Ascending aorta (tissue), 2 donors: ENCODE measurements at regions of chr11 and their contacts with region 1.

Region 1: DNA sequence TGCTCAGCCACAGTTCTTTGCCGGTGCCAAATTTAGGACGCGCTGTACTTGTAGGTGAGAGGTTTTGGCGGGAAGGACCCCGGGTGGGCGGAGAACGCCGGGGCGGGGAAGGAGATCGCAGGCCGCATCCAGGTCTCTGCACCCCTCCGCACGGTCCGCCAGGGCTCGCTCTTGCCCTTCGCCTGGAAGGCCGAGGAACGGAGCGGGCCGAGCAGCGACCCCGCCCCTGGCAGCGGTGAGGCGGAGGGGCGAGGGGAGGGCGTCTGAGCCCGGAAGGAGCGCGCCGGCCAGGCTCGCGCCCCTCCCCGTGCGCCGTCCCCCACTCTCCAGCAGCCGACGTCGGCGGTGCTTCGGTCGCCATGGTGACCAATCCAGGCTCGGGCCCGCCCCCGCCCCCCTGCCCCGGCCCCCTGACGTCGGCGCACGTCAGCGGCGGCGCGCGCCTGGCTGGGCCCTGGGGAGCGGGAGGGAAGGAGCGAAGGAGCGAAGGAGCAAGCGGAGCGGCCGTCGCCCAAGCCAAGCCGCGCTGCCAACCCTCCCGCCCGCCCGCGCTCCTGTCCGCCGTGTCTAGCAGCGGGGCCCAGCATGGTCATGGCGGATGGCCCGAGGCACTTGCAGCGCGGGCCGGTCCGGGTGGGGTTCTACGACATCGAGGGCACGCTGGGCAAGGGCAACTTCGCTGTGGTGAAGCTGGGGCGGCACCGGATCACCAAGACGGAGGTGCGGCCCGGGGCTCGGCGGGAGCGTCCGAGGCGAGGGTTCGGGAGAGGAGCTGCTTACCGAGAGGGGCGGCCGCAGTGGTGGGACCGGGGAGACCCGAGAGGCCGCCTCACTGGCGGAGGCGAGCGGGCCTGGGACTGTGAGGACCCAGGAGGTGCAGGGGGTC is at the start of gene SIK2:
- DNase-seq: peak; percentile 73 to 96
- H3K4me3 ChIP-seq: peak within 1 kb of the TSS; percentile 84 to 98
- H3K27ac ChIP-seq: peak within 1 kb of the TSS; percentile 90 to 96
- H3K4me1 ChIP-seq: peaks cover 0 to 8% of the 10 kb centered on the region in 2 donors
- H3K27me3 ChIP-seq: no peaks in the 10 kb centered on the region
- CTCF ChIP-seq: peak; percentile 88 to 98 (median 93)
- total RNA-seq, gene SIK2: 8.2 TPM

Region 2: DNA sequence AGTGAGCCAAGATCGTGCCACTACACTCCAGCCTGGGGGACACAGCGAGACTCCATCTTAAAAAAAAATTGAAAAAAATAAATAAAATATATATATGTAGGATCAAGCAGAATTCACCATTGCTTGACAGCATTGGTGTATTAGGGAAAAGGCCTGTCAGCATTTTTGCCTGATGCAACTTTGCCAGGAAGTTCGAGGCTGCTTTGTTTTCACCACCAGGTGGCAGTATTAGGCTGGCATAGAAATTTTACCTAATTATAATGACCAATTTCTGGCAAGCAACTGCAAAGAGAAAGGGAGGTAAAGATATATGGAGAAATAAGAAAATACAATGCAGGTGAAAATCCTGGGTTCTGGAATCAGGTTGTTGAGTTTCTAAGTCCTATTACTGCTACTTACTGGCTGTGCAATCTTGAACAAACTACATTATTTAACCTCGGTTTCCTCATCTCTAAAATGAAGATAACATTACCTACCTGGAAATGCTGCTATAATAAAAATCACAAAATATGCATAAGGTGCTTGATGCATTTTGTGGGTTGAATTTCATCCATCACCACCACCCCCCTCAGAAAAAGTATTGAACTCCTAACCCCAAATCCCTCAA is 37.0 kb before region 1 on chr11:
- intact Hi-C with region 1: loop called (anchors 5 kb)
- DNase-seq: peak in 1 of 2 donors; percentile 85
- H3K4me3 ChIP-seq: no peak overlapping the region
- H3K27ac ChIP-seq: no peak overlapping the region
- H3K4me1 ChIP-seq: no peaks in the 10 kb centered on the region
- H3K27me3 ChIP-seq: no peaks in the 10 kb centered on the region
- CTCF ChIP-seq: peak; percentile 70 to 92 (median 90)

Region 3: DNA sequence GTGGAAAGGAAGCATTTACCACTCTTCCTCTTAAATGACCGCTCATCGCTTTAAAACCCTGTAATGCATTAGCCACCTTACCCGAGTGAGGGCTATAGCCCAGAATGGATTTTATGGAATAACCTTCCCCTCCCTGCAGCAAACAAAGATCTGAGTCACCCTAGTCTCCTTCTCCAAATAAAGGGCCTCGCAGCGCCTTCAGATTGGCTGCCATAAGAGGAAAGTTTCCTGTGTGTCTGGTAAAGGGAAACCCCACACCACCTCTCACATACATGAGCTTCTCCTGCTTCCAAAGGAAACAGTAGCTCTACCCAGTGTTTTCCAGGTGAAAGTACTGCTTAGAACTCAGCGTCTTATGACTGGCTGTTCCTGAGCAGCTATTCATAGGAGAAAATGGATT is 116.2 kb after region 1 on chr11:
- intact Hi-C with region 1: loop called (anchors 5 kb)
- DNase-seq: peak in 1 of 2 donors; percentile 75
- H3K4me3 ChIP-seq: peak overlapping the region in 1 of 2 donors; percentile 10
- H3K27ac ChIP-seq: peak overlapping the region; percentile 54 to 61
- H3K4me1 ChIP-seq: peaks cover 4 to 10% of the 10 kb centered on the region in 2 donors
- H3K27me3 ChIP-seq: no peaks in the 10 kb centered on the region
- CTCF ChIP-seq: no peak

Region 4: DNA sequence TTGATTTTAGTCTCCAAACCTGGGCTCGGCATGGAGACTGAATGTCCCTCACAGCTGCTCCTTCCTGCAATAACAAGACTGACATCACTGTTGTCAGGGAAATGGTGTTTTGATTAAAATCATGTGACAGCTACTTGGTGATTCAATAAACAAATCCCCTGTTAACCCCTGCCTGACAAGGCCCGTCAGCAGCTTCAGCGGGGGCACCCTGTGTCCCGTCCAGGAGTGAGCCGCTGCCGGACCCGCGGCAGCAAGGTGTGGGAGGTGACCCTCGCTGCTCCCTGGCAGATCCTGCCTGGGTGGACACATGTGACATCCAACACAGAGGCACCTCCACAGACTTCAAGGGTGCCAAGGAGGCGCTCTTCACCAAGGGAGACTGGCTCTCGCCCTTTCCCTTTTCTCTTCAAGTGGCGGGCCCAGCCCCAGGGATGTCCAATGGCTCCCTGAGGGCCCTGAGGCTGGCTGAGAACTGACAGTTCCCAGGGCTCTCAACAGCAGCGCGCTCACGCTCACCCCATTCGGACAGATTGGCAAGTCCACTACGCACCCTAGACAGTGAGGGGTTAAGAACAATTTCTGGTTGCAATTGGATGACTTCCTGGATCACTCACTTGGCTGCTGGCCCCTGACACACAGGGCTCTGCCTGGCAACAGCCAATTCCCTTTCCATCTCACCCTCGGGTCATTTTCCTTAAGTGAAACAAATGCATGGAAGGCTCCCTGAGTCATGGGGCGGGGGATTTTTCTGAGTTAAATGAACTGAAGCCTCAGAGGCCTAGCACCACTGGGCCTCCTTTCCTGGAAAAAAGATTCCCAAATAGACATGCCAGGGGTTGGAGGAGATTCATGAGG is 133.3 kb after region 1 on chr11:
- intact Hi-C with region 1: loop called (anchors 1 kb)
- DNase-seq: peak; percentile 47 to 95
- H3K4me3 ChIP-seq: peak overlapping the region; percentile 29 to 55
- H3K27ac ChIP-seq: peak overlapping the region; percentile 91 to 97
- H3K4me1 ChIP-seq: peaks cover 41 to 76% of the 10 kb centered on the region in 2 donors
- H3K27me3 ChIP-seq: no peaks in the 10 kb centered on the region
- CTCF ChIP-seq: no peak

Region 5: GRCh38 chr11:111766093-111766833 is 164.0 kb after region 1 on chr11 and contains the start of gene PPP2R1B:
- intact Hi-C with region 1: loop called (anchors 1 kb)
- DNase-seq: peak in 1 of 2 donors; percentile 80
- H3K4me3 ChIP-seq: peak within 1 kb of the TSS; percentile 85 to 98
- H3K27ac ChIP-seq: peak within 1 kb of the TSS; percentile 89
- H3K4me1 ChIP-seq: peaks cover 6 to 17% of the 10 kb centered on the region in 2 donors
- H3K27me3 ChIP-seq: no peaks in the 10 kb centered on the region
- CTCF ChIP-seq: no peak
- total RNA-seq, gene PPP2R1B: 7.7 TPM

Region 6: DNA sequence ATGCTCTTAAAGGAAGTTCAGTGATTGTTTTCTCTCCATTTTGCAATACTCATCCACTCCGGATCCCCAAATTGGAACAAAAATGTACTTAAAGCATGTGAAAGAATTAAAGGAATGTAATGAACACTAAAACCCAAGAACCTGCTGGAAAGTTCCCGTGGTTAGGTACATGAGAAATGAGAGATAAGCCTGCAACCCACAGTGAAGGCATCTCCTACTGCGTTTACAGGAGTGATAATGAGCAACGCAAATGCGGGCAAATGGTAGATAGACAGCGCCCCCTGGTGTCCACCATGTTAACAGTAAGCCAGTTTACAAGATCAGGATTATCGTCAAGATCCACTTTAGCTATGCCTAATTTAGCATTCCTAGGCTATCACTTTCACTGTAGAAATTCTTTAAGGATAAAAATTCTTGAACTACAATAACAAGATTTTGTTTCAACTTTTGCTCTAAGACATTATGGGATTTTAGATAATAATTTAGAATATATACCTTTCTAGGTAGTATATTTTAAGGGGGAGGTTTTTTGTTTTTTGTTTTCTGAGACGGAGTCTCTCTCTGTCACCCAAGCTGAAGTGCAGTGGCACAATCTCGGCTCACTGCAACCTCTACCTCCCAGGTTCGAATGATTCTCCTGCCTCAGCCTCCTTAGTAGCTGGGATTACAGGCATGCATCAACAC is 239.3 kb after region 1 on chr11:
- intact Hi-C with region 1: loop called (anchors 1 kb)
- DNase-seq: peak; percentile 54 to 94
- H3K4me3 ChIP-seq: no peak overlapping the region
- H3K27ac ChIP-seq: no peak overlapping the region
- H3K4me1 ChIP-seq: peaks cover 0 to 2% of the 10 kb centered on the region in 2 donors
- H3K27me3 ChIP-seq: no peaks in the 10 kb centered on the region
- CTCF ChIP-seq: peak; percentile 78 to 85 (median 85)